CD8-positive, alpha-beta T cell (primary cell): ENCODE measurements at regions of chrX and their contacts with region 1.

Region 1: DNA sequence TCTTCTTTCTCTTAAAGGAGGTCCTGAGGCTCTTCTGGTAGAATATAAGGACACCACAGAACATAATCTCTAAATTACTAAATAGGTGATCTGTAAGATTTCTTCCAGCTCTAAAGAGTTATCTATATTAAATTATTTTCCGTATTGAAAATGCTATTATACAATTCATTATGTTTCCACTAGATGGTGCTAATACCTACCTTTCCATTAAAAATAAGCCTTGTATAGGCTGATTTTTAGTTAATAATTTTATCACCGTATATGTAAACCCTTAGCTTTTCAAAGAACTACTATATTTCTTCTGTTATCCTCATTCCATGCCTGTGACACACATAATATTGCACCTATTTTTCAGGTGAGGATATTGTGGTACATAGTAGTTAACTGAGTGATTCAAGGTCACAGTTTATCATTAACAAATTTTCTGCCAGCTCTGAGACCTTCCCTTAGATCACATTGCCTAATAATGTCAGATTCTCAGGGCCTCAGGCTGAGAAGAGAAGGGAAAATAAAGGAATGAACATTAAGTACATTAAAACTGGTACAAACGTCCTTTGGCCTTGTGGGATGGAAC is 138.8 kb downstream of the TEX11 start:
- DNase-seq: peak in 1 of 9 experiments; percentile 20
- ATAC-seq: no peak
- H3K4me3 ChIP-seq: no peak overlapping the region
- H3K4me3 Mint-ChIP-seq: no peak overlapping the region
- H3K27ac ChIP-seq: no peak overlapping the region
- H3K27ac Mint-ChIP-seq: no peak overlapping the region
- H3K4me1 ChIP-seq: no peaks in the 10 kb centered on the region
- H3K4me1 Mint-ChIP-seq: no peaks in the 10 kb centered on the region
- H3K27me3 ChIP-seq: no peaks in the 10 kb centered on the region
- H3K27me3 Mint-ChIP-seq: no peaks in the 10 kb centered on the region
- CTCF ChIP-seq: peak; percentile 69

Region 2: DNA sequence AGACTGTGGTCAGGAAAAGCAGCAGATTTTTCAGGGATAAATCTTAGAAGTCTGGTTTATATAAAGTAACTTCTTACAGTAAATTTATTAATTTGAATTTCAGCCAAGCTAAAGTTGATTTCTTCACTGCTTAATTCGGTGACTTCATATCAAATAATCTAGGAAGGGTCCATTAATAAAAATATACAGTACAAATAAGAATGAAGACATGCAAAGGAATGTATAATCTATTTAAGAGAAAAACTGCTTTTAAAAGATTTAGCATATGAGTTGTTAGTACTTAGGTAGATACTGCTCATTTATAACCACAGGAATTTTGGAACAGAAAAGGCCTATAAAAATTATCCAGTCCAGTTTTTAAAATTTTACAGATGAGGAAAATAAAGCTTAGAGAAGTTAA is 148.0 kb before region 1 on chrX:
- CTCF ChIA-PET with region 1: no interaction called
- POLR2A ChIA-PET with region 1: no interaction called
- intact Hi-C with region 1: no loop called
- DNase-seq: no peak
- ATAC-seq: no peak
- H3K4me3 ChIP-seq: no peak overlapping the region
- H3K4me3 Mint-ChIP-seq: no peak overlapping the region
- H3K27ac ChIP-seq: no peak overlapping the region
- H3K27ac Mint-ChIP-seq: no peak overlapping the region
- H3K4me1 ChIP-seq: no peaks in the 10 kb centered on the region
- H3K4me1 Mint-ChIP-seq: no peaks in the 10 kb centered on the region
- H3K27me3 ChIP-seq: no peaks in the 10 kb centered on the region
- H3K27me3 Mint-ChIP-seq: peaks cover 6% of the 10 kb centered on the region
- CTCF ChIP-seq: no peak

Region 3: GRCh38 chrX:70901465-70901864 is 131.7 kb after region 1 on chrX:
- CTCF ChIA-PET with region 1: no interaction called
- POLR2A ChIA-PET with region 1: no interaction called
- intact Hi-C with region 1: no loop called
- DNase-seq: no peak
- ATAC-seq: no peak
- H3K4me3 ChIP-seq: no peak overlapping the region
- H3K4me3 Mint-ChIP-seq: no peak overlapping the region
- H3K27ac ChIP-seq: no peak overlapping the region
- H3K27ac Mint-ChIP-seq: no peak overlapping the region
- H3K4me1 ChIP-seq: no peaks in the 10 kb centered on the region
- H3K4me1 Mint-ChIP-seq: no peaks in the 10 kb centered on the region
- H3K27me3 ChIP-seq: no peaks in the 10 kb centered on the region
- H3K27me3 Mint-ChIP-seq: no peaks in the 10 kb centered on the region
- CTCF ChIP-seq: no peak

Region 4: DNA sequence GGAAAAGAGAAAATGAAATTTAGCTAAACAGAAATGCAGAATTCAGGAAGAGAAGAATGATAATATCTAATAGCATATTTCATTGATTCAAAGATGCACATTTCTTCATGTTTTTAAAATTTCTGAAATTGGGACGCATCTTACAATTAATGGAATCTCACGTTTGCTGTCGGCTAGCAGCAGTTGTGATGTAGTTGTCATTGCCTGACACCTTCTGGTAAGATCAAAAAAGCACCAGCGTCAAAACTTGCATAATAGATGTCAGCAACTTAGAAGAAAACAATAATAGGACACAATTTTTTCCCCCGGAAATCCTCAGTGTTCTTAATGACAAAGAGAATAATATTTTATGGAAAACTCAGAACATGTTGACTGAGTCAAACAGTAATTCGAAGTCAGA is 191.0 kb after region 1 on chrX:
- CTCF ChIA-PET with region 1: interaction called, 3 read pairs
- POLR2A ChIA-PET with region 1: no interaction called
- intact Hi-C with region 1: loop called in 1 of 2 experiments (anchors 2 kb)
- DNase-seq: peak in 2 of 9 experiments; percentile 21 to 29
- ATAC-seq: no peak
- H3K4me3 ChIP-seq: no peak overlapping the region
- H3K4me3 Mint-ChIP-seq: no peak overlapping the region
- H3K27ac ChIP-seq: no peak overlapping the region
- H3K27ac Mint-ChIP-seq: no peak overlapping the region
- H3K4me1 ChIP-seq: no peaks in the 10 kb centered on the region
- H3K4me1 Mint-ChIP-seq: no peaks in the 10 kb centered on the region
- H3K27me3 ChIP-seq: no peaks in the 10 kb centered on the region
- H3K27me3 Mint-ChIP-seq: no peaks in the 10 kb centered on the region
- CTCF ChIP-seq: no peak

Region 5: GRCh38 chrX:71326394-71326793 is 556.6 kb after region 1 on chrX:
- CTCF ChIA-PET with region 1: no interaction called
- POLR2A ChIA-PET with region 1: no interaction called
- intact Hi-C with region 1: no loop called
- DNase-seq: no peak
- ATAC-seq: no peak
- H3K4me3 ChIP-seq: no peak overlapping the region
- H3K4me3 Mint-ChIP-seq: no peak overlapping the region
- H3K27ac ChIP-seq: no peak overlapping the region
- H3K27ac Mint-ChIP-seq: no peak overlapping the region
- H3K4me1 ChIP-seq: no peaks in the 10 kb centered on the region
- H3K4me1 Mint-ChIP-seq: no peaks in the 10 kb centered on the region
- H3K27me3 ChIP-seq: no peaks in the 10 kb centered on the region
- H3K27me3 Mint-ChIP-seq: no peaks in the 10 kb centered on the region
- CTCF ChIP-seq: no peak